ENCODE measurements at regions of chr1 and their contacts with region 1.

Region 1: DNA sequence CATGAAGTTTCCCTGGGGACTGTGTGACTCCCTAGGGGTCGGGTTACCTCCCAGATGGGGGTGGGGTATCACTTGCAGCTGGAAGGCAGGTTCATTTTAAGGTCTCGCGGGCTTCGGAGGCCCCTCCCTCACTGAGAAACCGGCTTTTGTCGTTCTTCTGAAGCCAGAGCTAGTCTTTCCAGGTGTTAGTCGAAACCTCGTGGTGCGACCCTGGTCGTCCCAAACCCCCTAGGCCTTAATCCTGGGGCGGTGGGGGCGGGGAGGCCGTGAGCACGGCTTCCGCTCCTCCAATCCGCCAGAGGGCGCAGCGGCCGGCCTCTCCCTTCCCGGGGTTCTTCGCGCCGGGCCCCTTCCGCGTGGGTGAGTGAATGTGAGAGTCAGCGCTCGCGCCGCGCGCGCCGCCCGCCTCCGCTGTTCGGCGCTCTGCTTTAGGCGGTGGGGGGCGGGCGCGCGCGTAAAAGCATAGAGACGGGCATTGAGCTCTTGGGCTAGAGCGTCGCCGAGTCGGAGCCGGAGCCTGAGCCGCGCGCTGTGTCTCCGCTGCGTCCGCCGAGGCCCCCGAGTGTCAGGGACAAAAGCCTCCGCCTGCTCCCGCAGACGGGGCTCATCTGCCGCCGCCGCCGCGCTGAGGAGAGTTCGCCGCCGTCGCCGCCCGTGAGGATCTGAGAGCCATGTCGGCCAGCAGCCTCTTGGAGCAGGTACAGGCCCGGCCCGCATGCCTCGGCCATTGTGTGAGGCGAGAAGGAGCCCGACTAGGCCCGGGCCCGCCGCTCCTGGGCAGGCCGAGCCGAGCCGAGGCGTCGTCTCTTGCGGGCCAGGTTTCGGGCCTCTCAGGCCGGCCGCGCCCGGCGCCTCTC is at the start of gene YTHDF2:
- DNase-seq: peak; percentile 95 to 98 (median 98)
- ATAC-seq: peak; percentile 97
- H3K4me3 ChIP-seq: peak within 1 kb of the TSS; percentile 88
- H3K4me3 Mint-ChIP-seq: peak within 1 kb of the TSS; percentile 92 to 100 (median 98)
- H3K27ac ChIP-seq: peak within 1 kb of the TSS; percentile 92
- H3K27ac Mint-ChIP-seq: peak within 1 kb of the TSS; percentile 93 to 98 (median 95)
- H3K4me1 ChIP-seq: peaks cover 26% of the 10 kb centered on the region in 2 donors
- H3K4me1 Mint-ChIP-seq: peaks cover 15 to 49% (median 34%) of the 10 kb centered on the region in 7 donors
- H3K27me3 ChIP-seq: no peaks in the 10 kb centered on the region
- H3K27me3 Mint-ChIP-seq: no peaks in the 10 kb centered on the region
- total RNA-seq, gene YTHDF2: 64.5 to 72.0 (median 71.5) TPM

Region 2: GRCh38 chr1:27525296-27526272 is 1211.1 kb before region 1 on chr1:
- CTCF ChIA-PET with region 1: no interaction called
- POLR2A ChIA-PET with region 1: no interaction called
- intact Hi-C with region 1: no loop called
- DNase-seq: peak in 8 of 9 donors; percentile 41 to 67 (median 52)
- ATAC-seq: peak; percentile 36
- H3K4me3 ChIP-seq: peak overlapping the region; percentile 53
- H3K4me3 Mint-ChIP-seq: peak overlapping the region; percentile 72 to 98 (median 93)
- H3K27ac ChIP-seq: peak overlapping the region; percentile 93
- H3K27ac Mint-ChIP-seq: peak overlapping the region; percentile 80 to 99 (median 98)
- H3K4me1 ChIP-seq: peaks cover 62% of the 10 kb centered on the region in 2 donors
- H3K4me1 Mint-ChIP-seq: peaks cover 63 to 82% (median 74%) of the 10 kb centered on the region in 7 donors
- H3K27me3 ChIP-seq: no peaks in the 10 kb centered on the region
- H3K27me3 Mint-ChIP-seq: no peaks in the 10 kb centered on the region

Region 3: GRCh38 chr1:28329395-28330153 is 407.1 kb before region 1 on chr1:
- CTCF ChIA-PET with region 1: no interaction called
- POLR2A ChIA-PET with region 1: interaction called, 4 read pairs
- intact Hi-C with region 1: loop called in 1 of 2 experiments (anchors 2 kb)
- DNase-seq: peak in 2 of 9 donors; percentile 32 to 48
- ATAC-seq: peak; percentile 14
- H3K4me3 ChIP-seq: peak overlapping the region; percentile 59
- H3K4me3 Mint-ChIP-seq: peak overlapping the region; percentile 89 to 98 (median 92)
- H3K27ac ChIP-seq: peak overlapping the region; percentile 86
- H3K27ac Mint-ChIP-seq: peak overlapping the region; percentile 92 to 100 (median 98)
- H3K4me1 ChIP-seq: peaks cover 13 to 14% of the 10 kb centered on the region in 2 donors
- H3K4me1 Mint-ChIP-seq: peaks cover 20 to 40% (median 39%) of the 10 kb centered on the region in 7 donors
- H3K27me3 ChIP-seq: no peaks in the 10 kb centered on the region
- H3K27me3 Mint-ChIP-seq: peaks cover 0 to 3% (median 0%) of the 10 kb centered on the region in 5 donors

Region 4: GRCh38 chr1:28359592-28360239 is 377.0 kb before region 1 on chr1:
- CTCF ChIA-PET with region 1: no interaction called
- POLR2A ChIA-PET with region 1: no interaction called
- intact Hi-C with region 1: no loop called
- DNase-seq: peak; percentile 26 to 67 (median 54)
- ATAC-seq: peak; percentile 80
- H3K4me3 ChIP-seq: no peak overlapping the region
- H3K4me3 Mint-ChIP-seq: no peak overlapping the region
- H3K27ac ChIP-seq: no peak overlapping the region
- H3K27ac Mint-ChIP-seq: no peak overlapping the region
- H3K4me1 ChIP-seq: no peaks in the 10 kb centered on the region
- H3K4me1 Mint-ChIP-seq: peaks cover 0 to 4% (median 0%) of the 10 kb centered on the region in 7 donors
- H3K27me3 ChIP-seq: no peaks in the 10 kb centered on the region
- H3K27me3 Mint-ChIP-seq: peaks cover 0 to 9% (median 0%) of the 10 kb centered on the region in 5 donors

Region 5: DNA sequence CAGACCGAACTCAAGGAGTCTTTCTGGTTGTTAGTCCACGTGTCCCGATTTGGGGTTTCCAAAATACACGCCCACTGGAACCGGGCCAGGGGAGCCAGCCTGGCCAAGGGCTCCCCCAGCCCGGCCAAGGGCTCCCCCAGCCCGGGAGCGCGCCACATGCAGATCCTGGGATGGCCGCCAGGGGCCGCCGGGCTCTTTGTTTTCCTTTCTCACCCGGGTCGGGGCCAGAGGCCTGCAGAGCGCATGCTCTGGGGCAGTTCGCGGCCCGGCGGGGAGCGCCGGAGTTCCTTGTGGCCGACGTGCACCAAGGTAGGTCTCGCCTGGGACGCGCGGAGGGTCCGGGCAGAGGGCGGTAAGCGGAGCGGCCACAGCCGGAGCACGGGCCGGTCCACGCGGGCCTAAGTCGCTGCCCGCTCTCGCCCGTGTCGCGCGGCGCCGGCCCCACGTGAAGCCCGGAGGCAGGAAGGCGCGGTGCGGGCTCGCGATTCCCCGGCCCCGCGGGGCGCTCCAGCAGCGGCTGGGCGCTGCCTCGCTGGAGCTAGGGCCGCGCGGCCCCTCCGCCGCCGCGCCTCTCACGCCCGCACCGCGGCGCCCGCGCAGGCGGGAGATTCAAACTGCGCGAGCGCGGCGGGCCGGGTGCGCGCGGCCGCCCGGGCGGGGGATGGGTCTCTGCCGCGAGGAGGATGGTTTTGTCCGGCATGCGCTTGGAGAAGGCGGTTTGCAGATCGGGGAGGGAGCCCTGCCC is 218.5 kb before region 1 on chr1:
- CTCF ChIA-PET with region 1: interaction called, 4 read pairs
- POLR2A ChIA-PET with region 1: interaction called, 5 read pairs
- intact Hi-C with region 1: loop called in 1 of 2 experiments (anchors 1 kb)
- DNase-seq: peak; percentile 77 to 94 (median 84)
- ATAC-seq: peak; percentile 95
- H3K4me3 ChIP-seq: peak overlapping the region; percentile 81
- H3K4me3 Mint-ChIP-seq: peak overlapping the region; percentile 76 to 91 (median 88)
- H3K27ac ChIP-seq: peak overlapping the region; percentile 76
- H3K27ac Mint-ChIP-seq: peak overlapping the region; percentile 59 to 91 (median 83)
- H3K4me1 ChIP-seq: peaks cover 9 to 10% of the 10 kb centered on the region in 2 donors
- H3K4me1 Mint-ChIP-seq: peaks cover 16 to 46% (median 23%) of the 10 kb centered on the region in 7 donors
- H3K27me3 ChIP-seq: no peaks in the 10 kb centered on the region
- H3K27me3 Mint-ChIP-seq: no peaks in the 10 kb centered on the region

Region 6: GRCh38 chr1:28642847-28643635 is 93.6 kb before region 1 on chr1 and contains the start of gene TAF12:
- CTCF ChIA-PET with region 1: interaction called, 16 read pairs
- POLR2A ChIA-PET with region 1: interaction called, 156 read pairs
- intact Hi-C with region 1: loop called (anchors 1 kb)
- DNase-seq: peak; percentile 81 to 92 (median 86)
- ATAC-seq: peak; percentile 91
- H3K4me3 ChIP-seq: peak within 1 kb of the TSS; percentile 93
- H3K4me3 Mint-ChIP-seq: peak within 1 kb of the TSS; percentile 94 to 100 (median 98)
- H3K27ac ChIP-seq: peak within 1 kb of the TSS; percentile 95
- H3K27ac Mint-ChIP-seq: peak within 1 kb of the TSS; percentile 93 to 99 (median 99)
- H3K4me1 ChIP-seq: peaks cover 26 to 35% of the 10 kb centered on the region in 2 donors
- H3K4me1 Mint-ChIP-seq: peaks cover 30 to 65% (median 55%) of the 10 kb centered on the region in 7 donors
- H3K27me3 ChIP-seq: no peaks in the 10 kb centered on the region
- H3K27me3 Mint-ChIP-seq: peaks cover 0 to 2% (median 0%) of the 10 kb centered on the region in 5 donors
- total RNA-seq, gene TAF12: 13.0 to 34.6 (median 19.3) TPM

Region 7: DNA sequence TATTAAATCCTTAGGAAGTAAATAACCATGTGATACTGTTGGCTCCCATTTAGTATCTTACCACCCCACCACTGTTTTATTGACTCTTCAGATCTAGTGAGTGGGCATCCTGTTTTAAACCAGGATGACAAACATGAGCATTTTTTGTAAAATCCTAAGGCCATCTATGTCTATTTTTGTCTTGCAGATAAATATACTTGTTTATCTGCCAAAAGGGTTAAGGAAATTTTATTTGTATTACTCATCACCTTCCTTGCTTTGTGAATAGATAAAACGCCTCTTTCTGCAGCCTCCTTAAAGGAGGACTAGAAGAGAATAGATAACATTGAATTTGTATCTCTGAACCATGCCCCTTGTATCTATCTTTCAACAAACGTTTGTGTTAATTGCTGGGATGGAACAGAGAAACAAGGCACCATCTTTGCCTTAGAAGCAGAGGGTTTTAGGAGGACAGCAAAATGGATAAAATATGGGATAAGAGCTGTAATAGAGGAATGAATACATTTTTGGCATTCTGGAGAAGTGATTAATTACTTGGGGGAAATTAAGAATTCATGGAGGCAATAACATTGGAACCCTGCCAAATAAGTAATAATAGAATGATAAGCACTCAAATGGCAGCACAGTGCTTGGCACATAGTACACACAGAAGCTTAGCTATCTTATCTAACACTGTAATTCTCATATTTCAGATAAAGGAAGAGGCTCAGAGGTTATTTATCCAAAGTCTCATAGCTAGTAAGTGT is 14.8 kb after region 1 on chr1:
- CTCF ChIA-PET with region 1: interaction called, 6 read pairs
- POLR2A ChIA-PET with region 1: interaction called, 6 read pairs
- intact Hi-C with region 1: loop called in 1 of 2 experiments (anchors 1 kb)
- DNase-seq: no peak
- ATAC-seq: no peak
- H3K4me3 ChIP-seq: no peak overlapping the region
- H3K4me3 Mint-ChIP-seq: peak overlapping the region in 6 of 10 donors; percentile 7 to 68 (median 38)
- H3K27ac ChIP-seq: no peak overlapping the region
- H3K27ac Mint-ChIP-seq: peak overlapping the region in 8 of 9 donors; percentile 3 to 83 (median 54)
- H3K4me1 ChIP-seq: peaks cover 43 to 55% of the 10 kb centered on the region in 2 donors
- H3K4me1 Mint-ChIP-seq: peaks cover 25 to 66% (median 40%) of the 10 kb centered on the region in 7 donors
- H3K27me3 ChIP-seq: no peaks in the 10 kb centered on the region
- H3K27me3 Mint-ChIP-seq: no peaks in the 10 kb centered on the region

Region 8: GRCh38 chr1:28886731-28887418 is 150.2 kb after region 1 on chr1:
- CTCF ChIA-PET with region 1: interaction called, 3 read pairs
- POLR2A ChIA-PET with region 1: interaction called, 3 read pairs
- intact Hi-C with region 1: loop called (anchors 2 kb)
- DNase-seq: peak; percentile 87 to 97 (median 91)
- ATAC-seq: peak; percentile 83
- H3K4me3 ChIP-seq: peak overlapping the region; percentile 98
- H3K4me3 Mint-ChIP-seq: peak overlapping the region; percentile 70 to 95 (median 84)
- H3K27ac ChIP-seq: peak overlapping the region; percentile 79
- H3K27ac Mint-ChIP-seq: peak overlapping the region; percentile 81 to 98 (median 94)
- H3K4me1 ChIP-seq: peaks cover 32 to 36% of the 10 kb centered on the region in 2 donors
- H3K4me1 Mint-ChIP-seq: peaks cover 37 to 68% (median 50%) of the 10 kb centered on the region in 7 donors
- H3K27me3 ChIP-seq: no peaks in the 10 kb centered on the region
- H3K27me3 Mint-ChIP-seq: no peaks in the 10 kb centered on the region

Measured in naive thymus-derived CD4-positive, alpha-beta T cell (primary cell).